Tibial artery (tissue), 4 donors: ENCODE measurements at regions of chr6 and their contacts with region 1.

Region 1: GRCh38 chr6:100538086-100538485 is 73.4 kb upstream of the SIM1 start:
- DNase-seq: no peak
- H3K4me3 ChIP-seq: no peak overlapping the region
- H3K27ac ChIP-seq: no peak overlapping the region
- H3K4me1 ChIP-seq: peaks cover 0 to 10% (median 0%) of the 10 kb centered on the region in 4 donors
- H3K27me3 ChIP-seq: no peaks in the 10 kb centered on the region
- CTCF ChIP-seq: no peak

Region 2: GRCh38 chr6:100504786-100505737 is 33.0 kb before region 1 on chr6:
- intact Hi-C with region 1: loop called (anchors 2 kb)
- DNase-seq: no peak
- H3K4me3 ChIP-seq: no peak overlapping the region
- H3K27ac ChIP-seq: peak overlapping the region; percentile 54 to 57
- H3K4me1 ChIP-seq: peaks cover 0 to 29% (median 13%) of the 10 kb centered on the region in 4 donors
- H3K27me3 ChIP-seq: no peaks in the 10 kb centered on the region
- CTCF ChIP-seq: no peak

Region 3: GRCh38 chr6:100719883-100720682 is 182.0 kb after region 1 on chr6:
- intact Hi-C with region 1: no loop called
- DNase-seq: no peak
- H3K4me3 ChIP-seq: no peak overlapping the region
- H3K27ac ChIP-seq: no peak overlapping the region
- H3K4me1 ChIP-seq: no peaks in the 10 kb centered on the region
- H3K27me3 ChIP-seq: no peaks in the 10 kb centered on the region
- CTCF ChIP-seq: peak in 1 of 2 experiments; percentile 15